Mammary epithelial cell (primary cell): ENCODE measurements at regions of chr18 and their contacts with region 1.

Region 1: GRCh38 chr18:41721103-41721790 is 233.8 kb upstream of the PIK3C3 start:
- DNase-seq: no peak
- H3K4me3 ChIP-seq: no peak overlapping the region
- H3K27ac ChIP-seq: no peak overlapping the region
- H3K4me1 ChIP-seq: no peaks in the 10 kb centered on the region
- H3K27me3 ChIP-seq: peaks cover 2% of the 10 kb centered on the region
- CTCF ChIP-seq: no peak

Region 2: DNA sequence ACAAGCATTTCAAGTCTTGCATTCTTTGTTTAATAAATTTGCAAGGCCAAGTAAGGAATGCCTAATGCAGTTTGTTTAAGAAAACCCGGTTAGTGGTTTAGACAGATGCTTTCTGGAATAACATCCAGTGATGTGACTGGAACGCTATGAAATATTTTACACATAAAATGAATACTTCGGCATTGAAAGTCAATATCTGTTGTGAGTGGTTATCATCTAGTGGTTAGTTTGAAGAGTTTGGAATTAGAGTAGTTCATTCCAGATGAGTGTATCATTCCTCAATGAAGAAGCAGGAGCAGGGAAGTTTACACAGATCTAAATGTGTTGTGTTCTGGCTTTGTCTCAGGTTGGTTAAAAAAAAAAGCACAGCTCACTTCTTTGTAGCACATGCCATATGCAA is 374.2 kb before region 1 on chr18:
- CTCF ChIA-PET with region 1: no interaction called
- dilution Hi-C with region 1: loop called (anchors 10 kb)
- in situ Hi-C with region 1: no loop called
- intact Hi-C with region 1: no loop called
- DNase-seq: no peak
- H3K4me3 ChIP-seq: no peak overlapping the region
- H3K27ac ChIP-seq: no peak overlapping the region
- H3K4me1 ChIP-seq: no peaks in the 10 kb centered on the region
- H3K27me3 ChIP-seq: no peaks in the 10 kb centered on the region
- CTCF ChIP-seq: no peak

Region 3: GRCh38 chr18:41703744-41704530 is 17.3 kb before region 1 on chr18:
- CTCF ChIA-PET with region 1: no interaction called
- dilution Hi-C with region 1: no loop called
- in situ Hi-C with region 1: no loop called
- intact Hi-C with region 1: no loop called
- DNase-seq: no peak
- H3K4me3 ChIP-seq: no peak overlapping the region
- H3K27ac ChIP-seq: no peak overlapping the region
- H3K4me1 ChIP-seq: no peaks in the 10 kb centered on the region
- H3K27me3 ChIP-seq: no peaks in the 10 kb centered on the region
- CTCF ChIP-seq: no peak